ENCODE measurements at regions of chr9 and their contacts with region 1.

Region 1: DNA sequence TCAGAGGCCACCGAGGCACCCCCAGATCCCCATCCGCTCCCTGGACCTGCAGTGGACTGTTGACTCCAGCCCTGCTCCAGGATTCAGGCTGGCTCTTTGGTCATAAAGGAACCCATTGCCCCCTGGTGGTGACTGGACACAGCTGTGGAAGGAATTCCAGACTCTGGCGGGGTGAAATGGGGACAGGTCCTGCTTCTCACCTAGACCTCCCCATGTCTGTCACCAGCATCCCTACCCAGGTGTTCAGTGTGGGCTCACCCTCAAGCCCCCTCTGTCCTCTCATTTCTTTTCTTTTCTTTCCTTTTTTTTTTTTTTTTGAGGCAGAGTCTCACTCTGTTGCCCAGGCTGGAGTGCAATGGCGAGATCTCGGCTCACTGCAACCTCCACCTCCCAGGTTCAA is 25.5 kb upstream of the STXBP1 start:
- DNase-seq: peak; percentile 65 to 89
- ATAC-seq: peak; percentile 88 to 93 (median 90)
- H3K4me3 ChIP-seq: no peak overlapping the region
- H3K27ac ChIP-seq: no peak overlapping the region
- H3K4me1 ChIP-seq: peaks cover 0 to 23% (median 3%) of the 10 kb centered on the region in 9 donors
- H3K27me3 ChIP-seq: no peaks in the 10 kb centered on the region
- CTCF ChIP-seq: peak; percentile 82 to 89 (median 87)

Region 2: GRCh38 chr9:127205183-127205470 is 381.4 kb before region 1 on chr9:
- intact Hi-C with region 1: loop called in 1 of 10 experiments (anchors 10 kb)
- DNase-seq: no peak
- ATAC-seq: peak in 5 of 8 donors; percentile 34 to 69 (median 60)
- H3K4me3 ChIP-seq: no peak overlapping the region
- H3K27ac ChIP-seq: no peak overlapping the region
- H3K4me1 ChIP-seq: peaks cover 0 to 11% (median 4%) of the 10 kb centered on the region in 9 donors
- H3K27me3 ChIP-seq: no peaks in the 10 kb centered on the region
- CTCF ChIP-seq: peak in 5 of 9 donors; percentile 16 to 50 (median 43)

Region 3: DNA sequence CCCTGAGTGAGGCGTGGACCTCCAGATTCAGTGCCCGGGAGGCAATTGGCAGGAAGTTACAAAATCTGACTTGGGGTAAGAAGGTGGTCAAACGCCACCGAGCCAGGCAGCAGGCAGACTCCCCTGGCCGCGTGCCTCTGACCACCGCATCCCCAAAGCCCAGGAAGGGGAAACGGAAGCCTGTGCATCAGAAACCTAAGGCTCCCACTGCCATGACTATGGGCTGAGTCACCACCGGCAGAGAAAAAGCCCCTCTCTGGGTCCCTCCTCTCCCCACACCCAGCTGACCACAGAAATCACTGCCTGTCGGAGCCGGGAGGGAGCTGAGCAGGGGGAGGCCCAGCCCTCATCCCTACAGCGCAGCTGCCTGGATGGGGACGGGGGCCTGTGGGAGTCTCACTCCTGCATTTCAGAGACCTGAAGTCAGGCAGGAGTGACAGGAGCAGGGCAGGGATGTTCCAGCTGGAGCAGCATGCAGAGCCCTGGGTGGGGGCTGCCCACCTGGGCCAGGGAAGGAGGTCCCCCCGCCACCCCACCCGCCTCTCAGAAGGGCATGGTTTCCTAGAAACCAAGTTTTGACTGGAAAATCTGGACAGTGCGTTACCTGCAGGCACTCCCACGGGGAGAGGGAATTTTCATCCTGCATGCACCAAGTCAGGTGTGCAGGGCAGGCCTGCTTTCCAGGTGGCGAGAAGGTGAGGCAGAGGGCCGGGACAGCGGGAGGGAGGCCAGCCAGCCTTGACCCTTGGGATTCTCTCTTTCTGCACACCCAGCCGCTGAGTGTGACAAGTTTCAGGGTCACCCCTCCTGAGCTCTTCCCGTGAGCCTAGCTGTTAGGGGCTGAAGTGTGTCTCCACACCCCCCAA is 67.0 kb before region 1 on chr9:
- intact Hi-C with region 1: loop called in 1 of 10 experiments (anchors 5 kb)
- DNase-seq: peak in 1 of 2 donors; percentile 51
- ATAC-seq: peak; percentile 26 to 70 (median 54)
- H3K4me3 ChIP-seq: no peak overlapping the region
- H3K27ac ChIP-seq: peak overlapping the region in 9 of 10 donors; percentile 75 to 97 (median 91)
- H3K4me1 ChIP-seq: peaks cover 12 to 63% (median 45%) of the 10 kb centered on the region in 9 donors
- H3K27me3 ChIP-seq: no peaks in the 10 kb centered on the region
- CTCF ChIP-seq: no peak

Region 4: DNA sequence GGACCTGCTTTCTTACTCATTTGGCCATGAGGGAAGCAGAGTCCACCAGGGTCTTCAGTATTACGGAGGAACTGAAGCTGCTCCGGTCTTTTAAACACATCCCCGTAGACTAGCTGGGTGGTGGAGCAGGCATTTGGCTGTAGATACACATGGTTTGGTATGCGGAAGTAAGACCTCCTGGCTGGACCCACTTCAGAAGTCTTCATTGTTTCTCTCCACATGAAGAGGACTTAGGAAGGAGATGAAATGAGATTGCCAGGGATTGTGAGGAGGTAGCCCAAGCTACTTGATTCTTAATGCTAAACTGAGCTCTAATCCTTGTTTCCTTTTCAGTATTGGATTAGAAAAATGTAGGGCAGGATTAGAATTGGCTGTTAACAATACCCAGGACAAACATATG is 58.4 kb after region 1 on chr9:
- intact Hi-C with region 1: loop called in 2 of 10 experiments (anchors 5 to 10 kb)
- DNase-seq: no peak
- ATAC-seq: peak in 6 of 8 donors; percentile 20 to 47 (median 40)
- H3K4me3 ChIP-seq: no peak overlapping the region
- H3K27ac ChIP-seq: peak overlapping the region in 3 of 10 donors; percentile 17 to 55 (median 35)
- H3K4me1 ChIP-seq: peaks cover 0 to 46% (median 19%) of the 10 kb centered on the region in 9 donors
- H3K27me3 ChIP-seq: no peaks in the 10 kb centered on the region
- CTCF ChIP-seq: no peak

Region 5: GRCh38 chr9:127734747-127735529 is 148.4 kb after region 1 on chr9 and contains the start of gene TOR2A:
- intact Hi-C with region 1: loop called in 8 of 10 experiments (anchors 1 to 5 kb)
- DNase-seq: peak; percentile 98 to 99
- ATAC-seq: peak; percentile 94 to 97 (median 95)
- H3K4me3 ChIP-seq: peak within 1 kb of the TSS; percentile 46 to 95 (median 78)
- H3K27ac ChIP-seq: peak within 1 kb of the TSS; percentile 90 to 99 (median 97)
- H3K4me1 ChIP-seq: peaks cover 10 to 35% (median 19%) of the 10 kb centered on the region in 9 donors
- H3K27me3 ChIP-seq: no peaks in the 10 kb centered on the region
- CTCF ChIP-seq: peak; percentile 90 to 99 (median 95)
- total RNA-seq, gene TOR2A: 1.5 to 6.3 (median 2.2) TPM

Region 6: DNA sequence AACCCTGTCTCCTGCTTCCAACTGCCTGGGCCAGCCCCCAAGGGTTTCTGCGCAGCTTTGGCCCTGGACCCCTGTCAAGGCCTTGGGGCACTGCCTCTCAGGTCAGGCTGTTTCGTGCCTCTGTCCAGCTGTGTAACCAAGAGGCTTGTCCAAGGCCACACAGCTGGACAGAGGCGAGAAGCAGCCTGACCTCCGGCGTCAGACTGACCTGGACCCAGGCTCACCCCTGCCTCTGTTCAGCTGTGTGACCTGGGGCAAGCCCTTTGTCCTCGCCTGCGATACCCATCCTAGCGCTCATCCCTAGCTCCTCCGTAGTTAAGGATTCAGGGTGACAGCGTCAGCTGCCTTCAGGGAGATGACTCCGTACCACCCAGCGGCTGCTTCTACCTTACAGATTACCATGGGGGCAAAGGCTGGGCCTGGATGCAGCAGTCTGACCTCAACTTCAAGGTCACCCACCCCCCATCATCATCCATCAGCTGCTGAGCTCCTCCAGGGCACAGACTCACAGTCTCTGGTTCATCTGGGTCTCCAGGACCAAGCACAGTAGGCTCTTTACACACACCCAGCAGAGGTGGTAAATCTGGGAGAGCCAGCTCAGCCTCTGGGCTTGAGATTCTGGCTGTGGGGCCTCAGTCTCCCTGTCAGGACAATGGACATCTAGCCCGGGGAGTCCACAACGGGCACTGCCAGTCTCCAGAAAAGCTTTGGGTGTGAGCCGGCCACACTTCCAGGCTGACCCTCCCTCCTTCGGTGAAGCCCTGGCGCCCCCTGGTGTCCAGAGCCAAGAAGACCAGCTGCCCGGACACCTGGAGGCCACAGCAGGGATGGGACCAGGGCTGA is 283.0 kb after region 1 on chr9:
- intact Hi-C with region 1: loop called in 2 of 10 experiments (anchors 5 kb)
- DNase-seq: peak; percentile 91 to 94
- ATAC-seq: peak; percentile 43 to 85 (median 78)
- H3K4me3 ChIP-seq: no peak overlapping the region
- H3K27ac ChIP-seq: peak overlapping the region in 9 of 10 donors; percentile 7 to 92 (median 47)
- H3K4me1 ChIP-seq: peaks cover 9 to 64% (median 42%) of the 10 kb centered on the region in 9 donors
- H3K27me3 ChIP-seq: no peaks in the 10 kb centered on the region
- CTCF ChIP-seq: peak; percentile 85 to 92 (median 89)

Measured in heart right ventricle (tissue), 16 donors.